ENCODE measurements at regions of chr2 and their contacts with region 1.

Region 1: DNA sequence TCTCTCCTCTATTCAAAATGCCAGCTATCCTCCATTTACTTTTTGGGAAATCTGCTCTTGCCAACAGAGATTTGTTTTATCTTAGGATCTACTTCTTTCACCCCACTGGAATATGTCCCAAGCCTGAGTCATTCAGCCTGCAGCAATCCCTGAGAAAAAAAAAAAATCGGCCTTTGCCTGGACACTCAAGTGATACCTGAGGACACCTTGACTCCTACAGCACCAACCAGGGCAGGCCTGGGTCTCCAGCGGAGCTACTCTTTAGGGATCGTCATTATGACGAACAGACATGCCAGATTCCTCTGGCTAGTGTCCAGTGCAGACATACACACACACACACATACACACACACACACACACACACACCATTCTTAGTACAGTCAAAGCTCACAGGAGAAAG is 2.3 kb upstream of the UGT1A6 start:
- DNase-seq: no peak
- H3K4me3 ChIP-seq: no peak overlapping the region
- H3K27ac ChIP-seq: no peak overlapping the region
- H3K27me3 ChIP-seq: peaks cover 4% of the 10 kb centered on the region
- CTCF ChIP-seq: no peak

Region 2: DNA sequence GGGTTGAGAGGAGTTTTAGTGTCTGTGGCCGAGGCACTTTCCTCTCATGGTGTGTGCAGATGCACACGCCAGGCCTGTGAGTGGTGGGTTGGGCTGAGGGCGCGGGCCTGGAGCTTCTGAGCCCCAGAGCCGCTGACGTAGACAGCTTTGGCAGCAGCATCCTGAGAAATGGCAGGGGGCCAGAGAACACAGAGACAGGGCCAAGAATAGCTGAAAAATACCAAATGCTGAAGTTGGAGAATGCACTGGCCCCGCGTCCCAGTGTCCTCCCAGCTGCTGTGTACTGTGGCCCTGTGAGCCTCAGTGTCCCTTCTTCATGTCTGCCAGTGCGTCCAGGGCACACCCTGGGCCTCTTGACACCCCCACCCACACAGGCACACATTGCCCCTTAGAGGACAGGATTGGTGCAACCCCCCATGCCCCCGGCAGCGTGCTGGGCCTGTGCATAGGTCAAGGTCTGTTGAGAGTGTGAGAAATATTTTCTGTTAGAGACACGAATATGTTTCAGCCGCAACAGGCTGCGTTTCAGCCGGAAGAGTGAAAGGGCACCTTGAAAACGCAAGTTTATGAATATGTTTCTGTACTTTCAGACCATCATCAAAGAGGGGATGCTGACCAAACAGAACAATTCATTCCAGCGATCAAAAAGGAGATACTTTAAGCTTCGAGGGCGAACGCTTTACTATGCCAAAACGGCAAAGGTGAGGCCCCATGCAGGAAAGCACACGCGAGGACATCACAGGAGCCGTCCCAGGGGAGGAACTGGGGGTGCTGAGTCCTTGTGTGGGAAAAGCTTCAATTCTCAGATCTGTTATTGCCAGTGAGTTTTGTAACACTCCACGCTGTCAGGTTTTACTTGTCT is 302.5 kb before region 1 on chr2:
- CTCF ChIA-PET with region 1: no interaction called
- POLR2A ChIA-PET with region 1: interaction called, 13 read pairs
- DNase-seq: peak; percentile 84
- H3K4me3 ChIP-seq: peak overlapping the region; percentile 42
- H3K27ac ChIP-seq: peak overlapping the region; percentile 87
- H3K27me3 ChIP-seq: no peaks in the 10 kb centered on the region
- CTCF ChIP-seq: no peak

Region 3: DNA sequence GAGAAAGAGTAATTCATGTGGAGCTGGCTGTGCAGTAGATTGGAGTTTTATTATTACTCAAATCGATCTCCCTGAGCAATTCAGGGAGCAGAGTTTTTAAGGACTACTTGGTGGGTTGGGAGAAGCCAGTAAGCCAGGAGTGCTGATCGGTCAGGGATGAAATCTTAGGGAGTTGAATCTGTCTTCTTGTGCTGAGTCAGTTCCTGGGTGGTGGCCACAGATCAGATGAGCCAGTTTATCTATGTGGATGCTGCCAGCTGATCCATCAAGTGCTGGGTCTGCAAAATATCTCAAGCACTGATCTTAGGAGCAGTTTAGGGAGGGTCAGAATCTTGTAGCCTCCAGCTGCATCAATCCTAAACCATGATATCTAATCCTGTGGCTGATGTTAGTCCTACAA is 90.0 kb before region 1 on chr2:
- CTCF ChIA-PET with region 1: no interaction called
- POLR2A ChIA-PET with region 1: no interaction called
- DNase-seq: no peak
- H3K4me3 ChIP-seq: no peak overlapping the region
- H3K27ac ChIP-seq: no peak overlapping the region
- H3K27me3 ChIP-seq: peaks cover 7% of the 10 kb centered on the region
- CTCF ChIP-seq: no peak